BJ (cell line): ENCODE measurements at regions of chr5 and their contacts with region 1.

Region 1: DNA sequence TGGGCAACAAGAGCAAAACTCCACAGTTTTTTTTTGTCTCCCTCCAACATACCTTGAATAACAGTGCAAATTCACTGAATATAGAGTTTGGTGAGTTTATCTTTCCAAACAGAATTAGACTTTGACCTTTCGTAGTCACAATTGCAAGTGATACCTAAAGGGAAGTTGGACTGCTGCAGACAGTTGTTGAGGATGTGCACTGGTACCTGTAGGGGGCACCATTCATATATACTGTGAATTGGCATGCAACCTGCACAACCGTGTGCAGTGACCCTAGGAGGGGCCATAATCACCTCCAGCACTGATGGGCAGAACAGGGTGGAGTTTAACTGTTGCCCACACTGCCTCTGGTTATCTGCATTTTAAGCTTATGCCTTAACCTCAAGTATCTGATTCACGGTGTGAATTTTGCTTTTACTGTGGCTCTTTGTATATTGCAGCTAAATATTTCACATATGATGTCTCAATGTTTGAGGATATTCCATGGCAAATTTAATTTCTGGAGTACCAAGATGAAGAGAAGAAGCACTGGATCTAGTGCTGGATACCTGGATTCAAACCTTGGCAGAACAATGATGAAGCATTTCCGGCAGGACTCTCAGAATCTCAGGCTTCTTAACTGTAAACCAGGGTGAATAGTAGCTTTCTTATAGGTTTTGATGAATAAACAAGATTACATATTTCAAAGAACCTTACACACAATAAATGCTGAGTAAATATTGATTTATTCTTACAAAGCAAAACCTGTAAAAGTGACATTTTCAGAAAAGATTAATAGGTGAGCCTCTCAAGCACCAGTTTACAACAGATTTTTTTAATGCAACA is 144.3 kb downstream of the ACTBL2 start:
- DNase-seq: no peak
- H3K4me3 ChIP-seq: no peak overlapping the region
- H3K27me3 ChIP-seq: no peaks in the 10 kb centered on the region
- CTCF ChIP-seq: peak; percentile 38; the same call in 1 of the 2 replicates

Region 2: DNA sequence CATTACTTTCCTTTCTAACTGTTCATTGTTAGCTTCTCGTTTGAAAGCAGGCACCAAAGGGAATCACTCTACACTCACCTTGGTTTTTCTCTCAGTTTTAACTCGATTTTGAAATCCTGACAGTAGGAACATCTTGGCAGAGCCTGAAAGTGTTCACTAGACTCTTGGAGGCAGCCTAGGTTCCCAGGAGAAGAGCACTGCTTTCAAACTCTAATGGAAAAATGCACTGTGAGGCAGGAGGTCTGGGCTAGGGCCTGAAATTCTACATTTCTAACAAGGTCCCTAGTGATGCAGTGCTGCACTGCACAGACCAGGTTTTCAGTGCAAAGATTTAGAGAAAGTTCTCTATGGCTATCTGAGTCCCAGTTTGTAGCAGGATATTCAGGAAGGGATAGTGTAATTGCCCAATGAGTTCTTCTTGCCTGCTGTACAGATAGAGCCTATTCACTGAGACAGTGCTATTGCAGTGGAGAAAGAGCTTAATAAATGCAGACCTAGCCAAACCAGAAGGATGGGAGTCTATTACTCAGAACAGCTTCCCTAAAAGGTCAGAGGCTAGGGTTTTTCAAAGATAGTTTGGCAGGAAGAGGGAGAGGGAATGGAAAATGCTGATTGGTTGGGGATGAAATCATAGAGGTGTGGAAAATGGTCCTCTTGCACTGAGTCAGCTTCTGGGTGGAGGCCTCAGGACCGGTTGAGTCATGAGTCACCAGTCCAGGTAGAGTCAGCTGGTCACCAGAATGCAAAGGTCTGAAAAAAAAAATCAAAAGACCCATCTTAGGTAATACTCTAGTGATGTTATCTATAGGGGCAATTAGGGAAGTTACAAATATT is 10.5 kb before region 1 on chr5:
- CTCF ChIA-PET with region 1: interaction called, 11 read pairs
- POLR2A ChIA-PET with region 1: no interaction called
- DNase-seq: no peak
- H3K4me3 ChIP-seq: no peak overlapping the region
- H3K27me3 ChIP-seq: 0 out of 2 replicates have a peak, but pooled peaks cover under 1% of the 10 kb centered on the region
- CTCF ChIP-seq: no peak